WTC11 (cell line): ENCODE measurements at regions of chr2 and their contacts with region 1.

Region 1: DNA sequence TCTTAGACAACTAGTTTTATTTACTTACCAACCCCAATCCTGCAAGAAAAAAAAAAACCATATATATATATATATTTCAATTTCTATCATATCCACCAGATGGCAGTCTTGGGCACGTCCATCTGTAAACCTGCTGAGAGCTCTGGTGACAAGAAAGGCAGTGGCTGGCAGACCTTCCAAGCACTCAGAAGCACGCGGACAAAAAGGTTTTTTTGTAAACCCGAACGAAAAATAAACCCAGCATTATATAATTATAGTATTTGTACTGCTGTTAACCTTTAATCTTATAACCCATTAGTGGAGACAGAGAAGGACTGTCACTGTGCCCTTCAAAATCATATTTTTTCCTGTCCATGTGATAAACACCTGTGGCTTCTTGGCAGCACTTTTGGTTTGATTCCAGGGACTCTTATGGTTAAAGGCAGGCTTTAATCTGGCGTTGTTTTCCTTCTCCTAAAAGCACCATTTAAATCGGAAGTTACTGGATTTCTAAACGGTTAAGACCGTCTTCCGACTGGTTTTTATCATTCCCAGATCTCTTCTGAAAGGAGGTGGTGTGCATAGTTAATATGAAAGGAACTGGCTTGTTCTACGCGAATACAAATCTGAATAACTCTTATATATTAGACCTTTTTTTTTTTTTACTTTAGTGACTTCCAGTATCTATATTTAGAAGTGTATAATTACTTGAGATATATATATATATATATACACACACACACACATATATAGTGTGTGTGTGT is 31.0 kb upstream of the SLC3A1 start:
- DNase-seq: peak; percentile 41
- ATAC-seq: peak; percentile 49
- H3K4me3 Mint-ChIP-seq: no peak overlapping the region
- H3K27ac Mint-ChIP-seq: no peak overlapping the region
- H3K4me1 Mint-ChIP-seq: peaks cover 32% of the 10 kb centered on the region
- H3K27me3 Mint-ChIP-seq: no peaks in the 10 kb centered on the region
- CTCF ChIP-seq: peak; percentile 46; the same call in 1 of the 2 replicates

Region 2: GRCh38 chr2:44233450-44234128 is 10.7 kb before region 1 on chr2:
- CTCF ChIA-PET with region 1: interaction called, 12 read pairs
- POLR2A ChIA-PET with region 1: no interaction called
- DNase-seq: no peak
- ATAC-seq: peak; percentile 38; the same call in 1 of the 2 replicates
- H3K4me3 Mint-ChIP-seq: no peak overlapping the region
- H3K27ac Mint-ChIP-seq: peak overlapping the region; percentile 88; the same call in 1 of the 2 replicates
- H3K4me1 Mint-ChIP-seq: peaks cover 51% of the 10 kb centered on the region
- H3K27me3 Mint-ChIP-seq: no peaks in the 10 kb centered on the region
- CTCF ChIP-seq: no peak

Region 3: DNA sequence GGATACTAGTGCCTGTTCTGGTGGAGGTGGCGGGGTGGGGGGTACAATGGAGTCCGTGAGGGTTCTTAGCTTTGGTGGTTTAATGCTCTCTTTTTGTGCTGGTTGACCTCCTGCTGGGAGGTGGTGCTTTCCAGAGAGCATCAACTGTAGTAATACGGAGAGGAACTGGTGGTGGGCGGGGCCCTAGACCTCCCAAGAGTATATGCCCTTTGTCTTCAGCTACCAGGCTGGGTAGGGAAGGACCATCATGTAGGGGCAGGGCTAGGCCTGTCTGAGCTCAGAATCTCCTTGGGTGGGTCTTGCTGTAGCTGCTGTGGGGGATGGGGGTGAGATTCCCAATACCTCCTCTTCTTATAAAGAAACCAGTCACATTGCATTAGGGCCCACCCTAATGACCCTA is 144.6 kb after region 1 on chr2:
- CTCF ChIA-PET with region 1: no interaction called
- POLR2A ChIA-PET with region 1: no interaction called
- DNase-seq: peak; percentile 22
- ATAC-seq: peak; percentile 64
- H3K4me3 Mint-ChIP-seq: no peak overlapping the region
- H3K27ac Mint-ChIP-seq: no peak overlapping the region
- H3K4me1 Mint-ChIP-seq: peaks cover 23% of the 10 kb centered on the region
- H3K27me3 Mint-ChIP-seq: no peaks in the 10 kb centered on the region
- CTCF ChIP-seq: no peak